ENCODE measurements at regions of chr9 and their contacts with region 1.

Region 1: GRCh38 chr9:20622330-20623020 is at the start of gene MLLT3:
- DNase-seq: peak; percentile 98
- ATAC-seq: peak; percentile 95
- total RNA-seq, gene MLLT3: 15.4 TPM

Region 2: GRCh38 chr9:19925817-19926503 is 696.5 kb before region 1 on chr9:
- intact Hi-C with region 1: loop called (anchors 10 kb)
- DNase-seq: peak; percentile 58
- ATAC-seq: peak; percentile 98

Region 3: DNA sequence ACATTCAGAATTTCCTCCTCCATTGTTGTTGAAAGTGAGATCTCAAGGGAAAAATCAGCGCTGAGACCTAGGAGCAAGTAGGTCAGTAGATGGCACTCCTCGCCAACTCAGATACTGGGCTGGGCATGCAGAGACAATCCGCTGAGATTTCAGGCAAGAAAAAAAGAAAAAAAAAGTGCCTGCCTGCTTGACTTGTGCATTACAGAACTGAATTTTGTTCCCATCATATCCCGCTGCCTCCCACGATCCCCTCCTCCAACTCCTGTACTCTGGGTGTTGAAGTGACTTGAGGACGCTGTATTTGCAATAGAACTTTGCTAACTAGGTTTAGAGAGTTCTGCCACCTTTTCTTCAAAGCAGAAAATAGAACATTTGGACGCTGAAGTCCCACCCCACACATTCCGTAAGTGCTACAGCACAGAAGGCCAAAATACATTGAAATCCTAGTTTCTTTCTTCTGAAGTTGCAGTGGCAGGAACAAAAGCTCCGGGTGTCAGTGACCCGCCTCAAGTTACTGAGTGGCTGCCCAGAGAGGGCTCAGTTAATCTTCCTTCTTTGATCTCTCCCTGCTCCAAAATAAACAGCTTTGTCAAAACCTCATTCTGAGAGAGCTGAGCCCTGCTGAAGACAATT is 266.0 kb before region 1 on chr9:
- intact Hi-C with region 1: loop called (anchors 10 kb)
- DNase-seq: peak; percentile 50
- ATAC-seq: peak; percentile 91

Region 4: GRCh38 chr9:20728493-20729220 is 106.2 kb after region 1 on chr9:
- intact Hi-C with region 1: no loop called
- DNase-seq: no peak
- ATAC-seq: peak; percentile 41